Caco-2 (cell line): ENCODE measurements at regions of chr15 and their contacts with region 1.

Region 1: DNA sequence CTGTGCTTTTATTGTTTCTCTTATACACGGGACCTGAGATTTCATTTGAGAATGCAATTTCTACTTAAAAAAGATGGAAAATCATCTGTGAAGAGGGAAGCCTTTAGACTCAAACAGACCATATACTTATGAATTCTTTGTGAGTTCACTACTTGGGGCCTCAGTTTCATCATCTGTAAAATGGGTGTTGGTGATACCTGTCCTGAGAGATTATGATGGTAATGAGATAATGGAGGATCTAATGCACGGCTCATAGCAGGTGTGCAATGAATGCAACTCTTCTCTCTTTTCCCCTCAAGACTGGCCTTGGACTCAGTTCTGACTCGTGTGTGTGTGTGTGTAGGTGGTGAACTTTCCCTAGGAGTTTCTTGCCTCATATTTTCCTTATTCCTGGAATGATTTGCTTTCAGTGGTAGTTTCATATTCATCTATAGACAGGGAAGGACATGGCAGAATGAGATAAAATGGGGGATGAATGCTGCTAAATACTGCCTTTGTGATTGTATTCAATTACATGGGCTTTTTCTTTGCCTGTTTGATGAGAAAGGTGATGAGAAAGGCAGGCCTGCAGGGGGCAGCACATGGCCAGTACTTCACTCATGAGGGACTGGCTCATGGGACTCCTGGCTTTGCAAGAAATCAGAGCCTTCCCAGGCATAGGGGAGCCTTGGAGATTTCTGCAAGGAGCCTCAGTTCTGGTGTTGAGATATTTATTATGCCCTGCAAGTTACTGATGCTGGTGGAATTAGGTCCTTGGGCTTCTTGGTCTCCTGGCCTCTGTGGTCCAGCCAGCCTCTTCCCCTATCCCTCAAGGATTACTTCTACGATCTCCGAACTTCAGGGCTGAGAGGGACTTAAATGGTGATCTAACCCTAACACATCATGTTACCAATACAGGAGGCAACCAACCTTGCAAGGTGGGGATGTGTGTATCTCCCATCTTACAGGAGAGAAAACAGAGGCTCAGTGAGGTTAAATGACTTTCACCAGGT is 70.7 kb downstream of the RPLP1 start:
- DNase-seq: peak; percentile 78 to 84
- H3K4me3 ChIP-seq: no peak overlapping the region
- H3K4me3 Mint-ChIP-seq: no peak overlapping the region
- H3K27ac Mint-ChIP-seq: no peak overlapping the region
- H3K4me1 ChIP-seq: peaks cover 10% of the 10 kb centered on the region; the same call in 1 of the 2 replicates
- H3K4me1 Mint-ChIP-seq: no peaks in the 10 kb centered on the region
- H3K27me3 ChIP-seq: no peaks in the 10 kb centered on the region
- H3K27me3 Mint-ChIP-seq: no peaks in the 10 kb centered on the region
- CTCF ChIP-seq: peak; percentile 63 to 71

Region 2: DNA sequence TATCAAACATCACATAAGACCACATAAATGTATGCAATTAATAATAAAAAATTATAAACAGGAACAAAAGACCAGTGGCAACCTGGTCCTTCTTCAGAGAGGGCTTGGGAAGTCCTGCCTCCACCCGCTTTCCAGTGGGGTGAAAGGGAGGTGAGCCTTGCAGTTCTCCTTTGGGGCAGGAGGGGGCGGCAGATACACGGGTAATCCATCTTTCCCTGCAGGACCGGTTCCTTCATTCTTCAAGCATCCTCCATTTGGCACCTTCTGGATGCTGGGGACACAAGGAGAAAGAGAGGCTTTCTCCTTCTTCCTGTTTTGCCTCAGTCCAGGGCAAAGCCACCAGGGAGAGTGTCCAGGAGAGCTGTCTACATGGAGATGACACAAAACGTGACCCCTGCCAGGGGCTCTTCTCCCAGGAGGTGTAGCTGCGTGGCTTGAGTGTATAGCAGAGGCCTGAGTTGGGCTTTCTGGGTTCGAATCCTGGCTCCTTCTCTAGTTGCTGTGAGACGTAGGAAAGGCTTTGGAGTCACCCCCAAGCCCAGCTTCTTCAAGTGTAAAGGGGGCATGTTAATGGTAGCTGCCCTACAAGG is 47.4 kb before region 1 on chr15:
- CTCF ChIA-PET with region 1: no interaction called
- POLR2A ChIA-PET with region 1: no interaction called
- intact Hi-C with region 1: loop called (anchors 5 kb)
- DNase-seq: peak; percentile 74 to 87
- H3K4me3 ChIP-seq: no peak overlapping the region
- H3K4me3 Mint-ChIP-seq: no peak overlapping the region
- H3K27ac Mint-ChIP-seq: no peak overlapping the region
- H3K4me1 ChIP-seq: no peaks in the 10 kb centered on the region
- H3K4me1 Mint-ChIP-seq: no peaks in the 10 kb centered on the region
- H3K27me3 ChIP-seq: no peaks in the 10 kb centered on the region
- H3K27me3 Mint-ChIP-seq: peaks cover 2% of the 10 kb centered on the region
- CTCF ChIP-seq: peak; percentile 89 to 93

Region 3: GRCh38 chr15:69559440-69560190 is 36.3 kb after region 1 on chr15:
- CTCF ChIA-PET with region 1: no interaction called
- POLR2A ChIA-PET with region 1: no interaction called
- intact Hi-C with region 1: loop called (anchors 5 kb)
- DNase-seq: no peak
- H3K4me3 ChIP-seq: no peak overlapping the region
- H3K4me3 Mint-ChIP-seq: no peak overlapping the region
- H3K27ac Mint-ChIP-seq: no peak overlapping the region
- H3K4me1 ChIP-seq: peaks cover 62% of the 10 kb centered on the region
- H3K4me1 Mint-ChIP-seq: peaks cover 49% of the 10 kb centered on the region
- H3K27me3 ChIP-seq: no peaks in the 10 kb centered on the region
- H3K27me3 Mint-ChIP-seq: no peaks in the 10 kb centered on the region
- CTCF ChIP-seq: no peak

Region 4: DNA sequence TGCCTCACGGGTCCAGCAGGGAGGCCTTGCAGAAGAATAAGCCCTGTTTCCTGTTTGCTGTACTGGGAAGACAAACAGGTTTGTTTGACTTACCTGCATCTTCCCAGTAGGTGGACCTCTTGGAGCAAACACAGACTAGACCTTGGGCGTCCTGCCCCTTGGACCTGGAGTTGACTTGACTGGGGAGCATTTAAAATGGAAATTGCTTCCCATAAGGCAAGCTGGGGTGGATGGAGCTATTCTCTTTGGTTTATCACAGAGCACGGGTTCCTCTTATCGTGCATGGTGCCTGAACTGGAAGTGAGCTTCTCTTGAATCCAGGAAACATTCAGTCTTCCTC is 80.7 kb after region 1 on chr15:
- CTCF ChIA-PET with region 1: no interaction called
- POLR2A ChIA-PET with region 1: no interaction called
- intact Hi-C with region 1: loop called (anchors 2 kb)
- DNase-seq: peak; percentile 59 to 61
- H3K4me3 ChIP-seq: no peak overlapping the region
- H3K4me3 Mint-ChIP-seq: no peak overlapping the region
- H3K27ac Mint-ChIP-seq: no peak overlapping the region
- H3K4me1 ChIP-seq: no peaks in the 10 kb centered on the region
- H3K4me1 Mint-ChIP-seq: peaks cover 21% of the 10 kb centered on the region
- H3K27me3 ChIP-seq: 0 out of 2 replicates have a peak, but pooled peaks cover 3% of the 10 kb centered on the region
- H3K27me3 Mint-ChIP-seq: peaks cover 6% of the 10 kb centered on the region
- CTCF ChIP-seq: peak in 1 of 2 experiments; percentile 17

Region 5: GRCh38 chr15:69652751-69653305 is 129.5 kb after region 1 on chr15:
- CTCF ChIA-PET with region 1: no interaction called
- POLR2A ChIA-PET with region 1: no interaction called
- intact Hi-C with region 1: loop called (anchors 5 kb)
- DNase-seq: no peak
- H3K4me3 ChIP-seq: no peak overlapping the region
- H3K4me3 Mint-ChIP-seq: no peak overlapping the region
- H3K27ac Mint-ChIP-seq: no peak overlapping the region
- H3K4me1 ChIP-seq: 0 out of 2 replicates have a peak, but pooled peaks cover 6% of the 10 kb centered on the region
- H3K4me1 Mint-ChIP-seq: peaks cover 5% of the 10 kb centered on the region
- H3K27me3 ChIP-seq: no peaks in the 10 kb centered on the region
- H3K27me3 Mint-ChIP-seq: peaks cover 15% of the 10 kb centered on the region
- CTCF ChIP-seq: no peak